K562 (cell line): ENCODE measurements at regions of chr1 and their contacts with region 1.

Region 1: DNA sequence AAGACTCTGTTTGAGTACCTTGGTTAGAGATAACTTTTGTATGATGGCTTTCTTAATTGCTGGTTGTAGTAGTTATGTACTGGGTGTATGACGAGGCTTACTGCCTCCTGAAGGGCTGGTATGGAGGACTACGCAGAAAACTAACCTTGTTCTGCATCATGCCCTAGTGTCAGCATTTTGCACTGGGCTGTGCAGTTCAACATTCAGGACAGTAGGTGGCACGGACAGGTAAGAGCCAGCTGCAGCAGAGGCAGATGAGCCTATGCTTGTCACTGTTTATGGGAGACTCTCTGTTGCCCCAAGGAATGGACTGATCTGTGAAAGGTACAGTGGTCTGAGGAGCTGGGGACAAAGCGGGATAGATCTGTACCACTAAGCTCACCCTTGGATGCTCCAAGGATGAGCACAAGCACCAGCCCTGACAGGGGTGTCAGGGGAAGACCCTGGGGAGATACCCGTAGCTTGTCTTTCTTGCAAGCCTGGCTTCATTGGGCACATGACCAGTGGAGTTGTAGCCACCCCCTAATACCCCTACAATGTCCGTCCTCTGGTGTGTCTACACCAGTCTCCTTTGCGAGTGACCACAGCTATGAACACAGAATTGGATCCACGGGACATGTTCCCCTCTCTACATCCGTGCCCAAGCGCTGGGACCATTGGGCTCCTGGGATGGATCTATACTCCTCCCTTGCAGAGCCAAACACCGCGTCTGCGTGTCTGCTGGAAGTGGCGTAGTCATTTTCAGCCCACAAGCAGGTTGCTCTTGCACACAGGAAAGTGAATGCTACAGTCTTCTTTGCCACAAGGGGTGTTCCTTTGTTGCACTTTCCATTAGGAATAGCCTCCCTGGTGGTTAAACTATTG is 51.1 kb upstream of the CFHR3 start:
- DNase-seq: peak; percentile 29 to 77 (median 38)
- ATAC-seq: peak; percentile 97
- H3K4me3 ChIP-seq: no peak overlapping the region
- H3K27ac ChIP-seq: no peak overlapping the region
- H3K4me1 ChIP-seq: no peaks in the 10 kb centered on the region
- H3K27me3 ChIP-seq: no peaks in the 10 kb centered on the region
- CTCF ChIP-seq: peak; percentile 66 to 85 (median 82)
- EP300 ChIP-seq: no peak
- POLR2A ChIP-seq: no peak
- RAD21 ChIP-seq: peak in 1 of 2 experiments; percentile 79; a peak in 3 of 4 replicates

Region 2: GRCh38 chr1:197062692-197063091 is 339.1 kb after region 1 on chr1:
- CTCF ChIA-PET with region 1: no interaction called
- POLR2A ChIA-PET with region 1: no interaction called
- in situ Hi-C with region 1: no loop called
- intact Hi-C with region 1: loop called (anchors 10 kb)
- DNase-seq: no peak
- ATAC-seq: no peak
- H3K4me3 ChIP-seq: no peak overlapping the region
- H3K27ac ChIP-seq: no peak overlapping the region
- H3K4me1 ChIP-seq: no peaks in the 10 kb centered on the region
- H3K27me3 ChIP-seq: no peaks in the 10 kb centered on the region
- CTCF ChIP-seq: no peak
- EP300 ChIP-seq: no peak
- POLR2A ChIP-seq: no peak
- RAD21 ChIP-seq: no peak